ENCODE measurements at regions of chr7 and their contacts with region 1.

Region 1: DNA sequence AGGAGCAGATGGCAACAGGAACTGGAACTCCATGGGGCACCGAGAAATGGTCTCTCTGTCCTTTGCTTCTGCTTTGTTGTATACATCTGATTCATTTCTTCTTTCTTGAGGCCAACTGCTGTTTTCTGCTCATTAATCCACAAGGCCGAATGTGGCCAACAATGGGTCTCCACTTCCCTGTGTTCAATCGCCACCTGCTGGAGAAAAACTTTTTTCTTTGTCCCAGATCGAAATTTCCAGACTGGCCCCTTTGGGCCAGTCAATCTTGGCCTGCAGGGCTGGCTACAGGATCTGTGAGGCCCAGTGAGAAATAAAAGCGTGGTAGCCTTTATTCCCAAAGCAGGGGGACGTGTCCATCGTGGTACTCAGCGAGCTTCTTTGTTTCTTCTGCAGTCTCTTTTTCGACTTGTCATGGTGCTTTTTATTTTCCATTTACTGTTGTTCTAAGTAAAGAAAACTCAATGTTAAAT is 58.8 kb downstream of the PARP12 start:
- DNase-seq: peak; percentile 15 to 64
- H3K4me3 ChIP-seq: no peak overlapping the region
- H3K27ac ChIP-seq: no peak overlapping the region
- H3K4me1 ChIP-seq: no peaks in the 10 kb centered on the region
- H3K27me3 ChIP-seq: no peaks in the 10 kb centered on the region
- CTCF ChIP-seq: peak; percentile 15 to 76 (median 58)
- EP300 ChIP-seq: no peak
- POLR2A ChIP-seq: no peak
- RAD21 ChIP-seq: peak; percentile 78 to 86

Region 2: GRCh38 chr7:139582671-139583155 is 421.2 kb before region 1 on chr7:
- CTCF ChIA-PET with region 1: interaction called, 15 read pairs
- POLR2A ChIA-PET with region 1: no interaction called
- DNase-seq: no peak
- H3K4me3 ChIP-seq: no peak overlapping the region
- H3K27ac ChIP-seq: no peak overlapping the region
- H3K4me1 ChIP-seq: no peaks in the 10 kb centered on the region
- H3K27me3 ChIP-seq: no peaks in the 10 kb centered on the region
- CTCF ChIP-seq: no peak
- EP300 ChIP-seq: no peak
- POLR2A ChIP-seq: no peak
- RAD21 ChIP-seq: no peak

Region 3: GRCh38 chr7:139602143-139602722 is 401.7 kb before region 1 on chr7:
- CTCF ChIA-PET with region 1: interaction called, 15 read pairs
- POLR2A ChIA-PET with region 1: interaction called, 3 read pairs
- DNase-seq: no peak
- H3K4me3 ChIP-seq: no peak overlapping the region
- H3K27ac ChIP-seq: no peak overlapping the region
- H3K4me1 ChIP-seq: no peaks in the 10 kb centered on the region
- H3K27me3 ChIP-seq: no peaks in the 10 kb centered on the region
- CTCF ChIP-seq: peak in 2 of 3 experiments; percentile 55 to 62; a peak in 3 of 4 replicates
- EP300 ChIP-seq: no peak
- POLR2A ChIP-seq: no peak
- RAD21 ChIP-seq: peak; percentile 70

Region 4: DNA sequence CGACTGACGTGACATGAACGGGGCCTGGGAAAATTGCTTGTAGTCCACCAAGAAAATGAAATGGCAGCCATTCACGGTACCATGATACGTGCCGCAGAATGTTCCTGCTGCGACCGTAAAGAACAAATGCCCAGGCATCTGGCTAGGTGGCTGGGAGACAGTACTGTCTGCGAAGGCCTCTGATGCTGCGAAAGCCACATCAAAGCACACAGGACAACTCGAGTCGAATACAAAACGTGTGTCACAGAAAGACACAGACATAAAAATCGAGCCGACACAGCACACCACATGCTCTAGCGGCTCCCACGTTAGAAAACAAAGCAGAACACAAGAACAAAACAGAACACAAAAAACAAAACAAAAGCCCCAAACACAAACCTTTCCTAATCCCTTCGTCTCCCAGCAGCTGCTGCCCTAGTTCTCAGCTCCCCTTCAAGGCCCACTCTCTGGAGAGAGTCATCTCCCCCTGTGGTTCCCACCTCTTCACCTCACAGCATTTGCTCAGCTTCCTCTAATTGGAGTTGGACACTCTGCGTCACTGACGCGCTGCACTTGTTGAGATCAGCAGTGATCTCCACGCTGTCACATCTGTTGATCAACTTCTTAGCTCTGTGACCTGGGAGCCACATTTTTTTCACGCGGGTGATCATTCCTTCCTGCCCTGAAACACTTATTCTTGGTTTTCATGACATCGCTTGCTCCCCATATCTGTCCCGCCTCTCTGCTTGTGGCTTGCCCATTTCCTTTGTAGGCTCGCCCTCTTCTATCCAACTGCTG is 368.2 kb before region 1 on chr7:
- CTCF ChIA-PET with region 1: interaction called, 11 read pairs
- POLR2A ChIA-PET with region 1: interaction called, 3 read pairs
- DNase-seq: no peak
- H3K4me3 ChIP-seq: no peak overlapping the region
- H3K27ac ChIP-seq: no peak overlapping the region
- H3K4me1 ChIP-seq: peaks cover 0 to 3% (median 0%) of the 10 kb centered on the region in 4 experiments; a peak in 3 of 7 replicates
- H3K27me3 ChIP-seq: no peaks in the 10 kb centered on the region
- CTCF ChIP-seq: no peak
- EP300 ChIP-seq: no peak
- POLR2A ChIP-seq: no peak
- RAD21 ChIP-seq: no peak

Region 5: DNA sequence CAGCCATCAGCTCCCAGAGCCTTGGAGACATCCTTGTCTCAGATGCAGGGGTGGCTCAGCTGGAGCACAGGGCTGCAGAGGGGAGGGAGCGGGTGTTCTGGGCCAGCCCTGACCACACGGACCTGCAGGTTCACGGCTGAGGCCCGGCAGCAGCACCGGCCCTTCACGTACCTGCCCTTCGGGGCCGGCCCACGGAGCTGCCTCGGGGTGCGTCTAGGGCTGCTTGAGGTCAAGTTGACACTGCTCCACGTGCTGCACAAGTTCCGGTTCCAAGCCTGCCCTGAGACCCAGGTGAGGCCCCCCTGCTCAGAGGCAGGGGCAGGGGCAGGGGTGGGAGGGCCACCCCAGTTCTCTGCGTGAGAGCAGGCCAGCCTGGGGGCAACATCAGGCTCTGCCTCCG is 13.6 kb after region 1 on chr7:
- CTCF ChIA-PET with region 1: interaction called, 25 read pairs
- POLR2A ChIA-PET with region 1: no interaction called
- DNase-seq: no peak
- H3K4me3 ChIP-seq: no peak overlapping the region
- H3K27ac ChIP-seq: no peak overlapping the region
- H3K4me1 ChIP-seq: no peaks in the 10 kb centered on the region
- H3K27me3 ChIP-seq: no peaks in the 10 kb centered on the region
- CTCF ChIP-seq: no peak
- EP300 ChIP-seq: no peak
- POLR2A ChIP-seq: no peak
- RAD21 ChIP-seq: no peak

Region 6: DNA sequence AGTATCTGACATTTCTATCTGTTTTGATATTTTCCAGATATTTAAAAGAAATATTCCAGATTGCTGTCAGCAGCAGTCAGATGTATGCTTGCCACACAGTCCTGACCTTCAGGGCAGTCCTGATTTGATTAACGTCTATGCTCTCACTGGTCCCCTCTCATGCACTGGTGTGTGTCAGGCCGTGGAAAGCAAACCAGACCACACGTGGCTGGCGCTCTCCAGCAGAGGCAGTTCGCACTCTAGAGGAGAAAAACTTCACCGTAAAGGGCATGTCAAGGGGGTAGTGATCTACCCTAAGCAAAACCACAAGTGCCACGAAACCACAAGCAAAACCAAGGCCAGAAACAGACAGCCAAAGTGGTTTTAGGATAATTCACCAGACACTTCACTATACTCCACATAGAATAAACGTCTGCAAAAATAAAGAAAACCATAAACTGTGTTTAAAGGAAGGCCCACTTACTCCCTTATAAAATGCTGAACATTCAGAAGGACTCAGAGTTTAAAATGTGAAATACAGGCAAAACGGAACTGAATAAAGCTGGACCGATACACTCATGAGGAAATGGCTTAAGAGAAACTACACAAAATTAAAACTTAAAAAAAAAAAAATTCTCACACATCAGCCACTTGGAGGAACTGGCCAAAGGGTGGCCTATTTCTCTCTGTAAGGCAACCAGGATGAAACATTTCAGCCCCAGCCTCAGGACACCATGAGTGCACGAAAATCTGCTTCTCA is 32.4 kb after region 1 on chr7:
- CTCF ChIA-PET with region 1: no interaction called
- POLR2A ChIA-PET with region 1: no interaction called
- DNase-seq: no peak
- H3K4me3 ChIP-seq: no peak overlapping the region
- H3K27ac ChIP-seq: no peak overlapping the region
- H3K4me1 ChIP-seq: no peaks in the 10 kb centered on the region
- H3K27me3 ChIP-seq: no peaks in the 10 kb centered on the region
- CTCF ChIP-seq: no peak
- EP300 ChIP-seq: no peak
- POLR2A ChIP-seq: no peak
- RAD21 ChIP-seq: no peak

Region 7: DNA sequence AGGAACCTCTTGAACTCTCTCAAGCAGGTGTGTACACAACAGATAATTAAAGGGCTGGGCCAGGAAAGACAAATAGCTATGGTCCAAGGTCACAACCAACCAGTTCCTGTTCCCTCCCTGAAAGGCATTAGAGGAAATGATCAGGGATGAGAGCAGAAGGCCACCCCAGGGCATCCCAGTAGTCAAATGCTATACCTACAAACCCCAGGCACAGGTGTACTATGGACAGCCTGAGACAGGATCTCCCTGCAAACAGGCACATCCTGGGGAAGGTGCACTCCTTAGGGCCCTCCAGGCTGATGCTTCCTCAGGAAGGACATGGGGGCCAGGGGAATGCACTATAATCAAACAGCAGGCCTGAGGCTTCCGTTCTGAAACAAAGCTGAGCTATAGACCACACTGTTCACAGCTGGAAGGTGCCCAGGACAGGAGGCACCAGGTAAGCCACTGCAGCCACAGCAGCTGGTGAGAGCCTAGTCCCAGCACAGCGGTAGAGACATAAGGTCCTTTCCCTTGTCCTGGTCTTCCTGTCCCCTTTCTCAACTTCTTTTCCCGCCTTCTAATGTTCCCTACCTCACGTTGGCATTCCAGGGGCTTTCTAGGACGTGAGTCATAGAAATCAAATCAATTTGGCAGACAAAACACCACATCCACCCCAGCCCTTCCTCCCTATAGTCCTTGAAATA is 45.5 kb after region 1 on chr7:
- CTCF ChIA-PET with region 1: no interaction called
- POLR2A ChIA-PET with region 1: no interaction called
- DNase-seq: peak in 1 of 2 experiments; percentile 33
- H3K4me3 ChIP-seq: no peak overlapping the region
- H3K27ac ChIP-seq: no peak overlapping the region
- H3K4me1 ChIP-seq: no peaks in the 10 kb centered on the region
- H3K27me3 ChIP-seq: no peaks in the 10 kb centered on the region
- CTCF ChIP-seq: no peak
- EP300 ChIP-seq: no peak
- POLR2A ChIP-seq: no peak
- RAD21 ChIP-seq: no peak

Measured in H1 (cell line).